AG04450 (cell line): ENCODE measurements at regions of chr2 and their contacts with region 1.

Region 1: DNA sequence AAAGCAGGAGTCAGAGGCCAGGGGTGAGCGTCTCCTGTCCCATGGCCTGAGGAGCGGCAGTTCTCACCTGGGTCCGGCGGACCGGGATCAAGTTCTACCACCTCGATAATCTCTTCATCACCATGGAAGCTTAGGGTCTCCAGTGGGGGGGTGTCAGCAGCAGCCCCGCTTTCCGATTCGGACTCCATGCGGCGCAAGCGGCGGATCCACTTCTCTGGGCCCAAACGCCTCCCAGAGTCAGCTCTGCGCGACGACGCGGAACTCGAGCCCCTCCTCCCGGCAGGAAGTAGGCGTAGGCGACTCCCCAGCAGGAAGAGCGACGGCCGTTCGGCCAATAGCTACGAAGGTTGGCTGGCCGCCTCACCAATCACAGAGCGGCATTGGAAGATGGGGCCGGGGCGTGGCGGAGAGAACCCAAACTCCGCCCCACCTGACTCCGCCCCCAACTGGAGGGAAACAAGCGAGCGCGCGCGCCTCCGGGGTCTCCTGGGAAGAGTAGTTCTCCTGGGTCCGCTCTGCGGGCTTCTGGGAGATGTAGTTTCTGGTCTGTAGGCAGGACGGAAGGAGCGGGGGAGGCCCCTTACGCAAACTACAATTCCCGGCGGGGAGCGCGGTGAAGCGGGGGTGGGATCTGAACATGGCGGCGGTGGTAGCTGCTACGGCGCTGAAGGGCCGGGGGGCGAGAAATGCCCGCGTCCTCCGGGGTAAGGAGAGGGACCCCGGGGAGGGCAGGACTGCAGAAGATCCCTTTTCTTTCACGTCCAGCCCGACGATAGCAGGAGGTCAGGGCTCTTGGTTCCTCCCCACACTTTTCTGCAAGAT is at the starts of genes AAMP and PNKD:
- DNase-seq: peak; percentile 99
- H3K4me3 ChIP-seq: peak within 1 kb of the TSS; percentile 96
- H3K27ac ChIP-seq: peak within 1 kb of the TSS; percentile 65
- H3K27me3 ChIP-seq: no peaks in the 10 kb centered on the region
- CTCF ChIP-seq: 0 out of 2 replicates have a peak, but pooled peaks have one; percentile 26
- polyA plus RNA-seq, gene AAMP: 51.6 and 55.1 TPM in 2 replicates
- polyA plus RNA-seq, gene PNKD: 32.1 and 45.9 TPM in 2 replicates

Region 2: GRCh38 chr2:218286570-218287459 is 16.7 kb after region 1 on chr2:
- CTCF ChIA-PET with region 1: interaction called, 39 read pairs
- POLR2A ChIA-PET with region 1: interaction called, 17 read pairs
- DNase-seq: peak; percentile 84
- H3K4me3 ChIP-seq: peak overlapping the region; percentile 64
- H3K27ac ChIP-seq: peak overlapping the region; percentile 100
- H3K27me3 ChIP-seq: no peaks in the 10 kb centered on the region
- CTCF ChIP-seq: no peak

Region 3: DNA sequence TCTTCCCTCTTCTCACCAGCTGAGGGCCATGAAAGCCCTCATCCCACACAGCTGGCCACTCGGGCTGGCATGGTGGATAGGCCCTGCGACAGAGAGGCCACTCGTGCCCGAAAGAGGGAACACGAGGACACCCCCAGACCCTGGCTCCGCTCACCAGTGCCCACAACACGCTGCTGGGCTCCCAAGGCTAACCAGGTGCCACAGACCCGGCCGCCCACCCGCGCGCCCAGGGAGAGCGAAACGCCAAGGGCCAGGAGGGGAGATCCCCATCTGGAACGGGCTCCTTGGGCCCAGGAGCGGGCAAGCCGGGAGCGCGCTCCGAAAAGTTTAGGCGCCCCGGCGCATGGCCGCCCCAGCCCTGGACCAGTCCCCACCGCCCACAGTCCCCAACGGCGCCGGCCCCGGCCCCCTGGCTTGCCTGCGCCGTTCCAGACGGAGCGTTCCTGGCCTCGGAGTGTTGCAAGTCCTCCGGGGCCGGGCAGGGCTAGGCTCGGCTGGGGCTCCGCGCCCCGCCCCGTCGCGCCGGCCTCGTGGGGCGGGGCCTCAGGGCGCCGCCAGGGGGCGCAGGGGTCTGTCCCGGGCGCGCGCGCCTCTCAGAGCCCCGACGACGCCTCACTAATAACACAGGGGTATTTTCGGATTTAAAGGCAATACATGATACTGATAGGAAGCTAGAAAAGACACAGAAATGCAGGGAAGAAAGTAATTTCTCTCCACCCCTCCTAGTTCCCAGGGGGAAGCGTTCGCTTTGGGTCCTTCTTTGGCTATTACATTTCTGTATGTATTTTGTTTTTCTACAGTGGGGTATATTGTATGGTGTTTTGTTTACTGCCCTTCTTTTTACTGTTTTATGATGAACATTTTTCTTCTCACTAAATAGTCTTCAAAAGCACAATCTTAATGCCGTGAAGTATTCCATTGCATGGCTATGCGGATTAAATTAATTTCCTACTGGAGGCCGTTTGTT is 22.2 kb after region 1 on chr2 and contains the start of gene TMBIM1:
- CTCF ChIA-PET with region 1: interaction called, 39 read pairs
- POLR2A ChIA-PET with region 1: interaction called, 17 read pairs
- DNase-seq: no peak
- H3K4me3 ChIP-seq: peak within 1 kb of the TSS; percentile 81
- H3K27ac ChIP-seq: peak within 1 kb of the TSS; percentile 57
- H3K27me3 ChIP-seq: no peaks in the 10 kb centered on the region
- CTCF ChIP-seq: peak; percentile 58
- polyA plus RNA-seq, gene TMBIM1: 91.4 and 105 TPM in 2 replicates

Region 4: GRCh38 chr2:218357236-218358159 is 87.4 kb after region 1 on chr2:
- CTCF ChIA-PET with region 1: interaction called, 15 read pairs
- POLR2A ChIA-PET with region 1: no interaction called
- DNase-seq: no peak
- H3K4me3 ChIP-seq: no peak overlapping the region
- H3K27ac ChIP-seq: no peak overlapping the region
- H3K27me3 ChIP-seq: no peaks in the 10 kb centered on the region
- CTCF ChIP-seq: no peak

Region 5: GRCh38 chr2:218395797-218396687 is 125.9 kb after region 1 on chr2:
- CTCF ChIA-PET with region 1: interaction called, 73 read pairs
- POLR2A ChIA-PET with region 1: interaction called, 5 read pairs
- DNase-seq: peak; percentile 94
- H3K4me3 ChIP-seq: peak overlapping the region; percentile 76
- H3K27ac ChIP-seq: peak overlapping the region; percentile 98
- H3K27me3 ChIP-seq: no peaks in the 10 kb centered on the region
- CTCF ChIP-seq: peak; percentile 75

Region 6: GRCh38 chr2:218466016-218466521 is 196.0 kb after region 1 on chr2:
- CTCF ChIA-PET with region 1: interaction called, 18 read pairs
- POLR2A ChIA-PET with region 1: no interaction called
- DNase-seq: no peak
- H3K4me3 ChIP-seq: no peak overlapping the region
- H3K27ac ChIP-seq: no peak overlapping the region
- H3K27me3 ChIP-seq: no peaks in the 10 kb centered on the region
- CTCF ChIP-seq: peak; percentile 42